Tibial artery (tissue), 4 donors: ENCODE measurements at regions of chr9 and their contacts with region 1.

Region 1: GRCh38 chr9:129549685-129550084 is 71.2 kb downstream of the C9orf50 start:
- DNase-seq: peak; percentile 54 to 81
- H3K4me3 ChIP-seq: peak overlapping the region; percentile 56 to 78
- H3K27ac ChIP-seq: peak overlapping the region; percentile 91 to 95
- H3K4me1 ChIP-seq: peaks cover 0 to 33% (median 27%) of the 10 kb centered on the region in 4 donors
- H3K27me3 ChIP-seq: no peaks in the 10 kb centered on the region
- CTCF ChIP-seq: no peak

Region 2: DNA sequence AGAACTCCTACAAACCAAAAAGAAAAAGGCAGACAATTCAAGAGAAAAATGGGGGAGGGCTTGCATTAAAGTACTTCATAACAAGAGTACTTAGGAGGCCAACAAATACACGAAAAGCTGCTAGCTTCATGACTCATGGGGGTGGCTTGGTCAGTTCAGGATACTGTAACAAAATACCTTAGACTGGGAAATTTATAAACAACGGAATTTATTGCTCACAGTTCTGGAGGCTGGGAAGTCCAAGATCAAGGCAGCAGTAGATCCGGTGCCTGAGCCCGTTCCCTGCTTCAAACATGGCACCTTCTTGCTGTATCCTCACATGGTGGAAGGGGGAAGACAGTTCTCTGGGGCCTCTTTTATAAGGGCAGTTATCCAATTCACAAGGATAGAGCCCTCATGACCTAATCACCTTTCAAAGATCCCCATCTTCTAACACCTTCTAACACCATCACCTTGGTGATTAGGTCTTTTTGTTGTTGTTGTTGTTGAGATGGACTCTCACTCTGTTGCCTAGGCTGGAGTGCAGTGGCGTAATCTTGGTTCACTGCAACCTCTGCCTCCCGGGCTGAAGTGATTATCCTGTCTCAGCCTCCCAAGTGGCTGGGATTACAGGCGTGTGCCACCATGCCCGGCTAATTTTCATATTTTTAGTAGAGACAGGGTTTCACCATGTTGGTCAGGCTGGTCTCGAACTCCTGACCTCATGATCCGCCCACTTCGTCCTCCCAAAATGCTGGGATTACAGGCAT is 40.0 kb before region 1 on chr9:
- intact Hi-C with region 1: loop called (anchors 5 kb)
- DNase-seq: no peak
- H3K4me3 ChIP-seq: no peak overlapping the region
- H3K27ac ChIP-seq: no peak overlapping the region
- H3K4me1 ChIP-seq: no peaks in the 10 kb centered on the region
- H3K27me3 ChIP-seq: no peaks in the 10 kb centered on the region
- CTCF ChIP-seq: no peak